WTC11 (cell line): ENCODE measurements at regions of chr6 and their contacts with region 1.

Region 1: GRCh38 chr6:27295301-27296081 is 16.6 kb downstream of the POM121L2 start:
- DNase-seq: peak; percentile 41
- ATAC-seq: peak; percentile 46
- H3K4me3 Mint-ChIP-seq: peak overlapping the region; percentile 93
- H3K27ac Mint-ChIP-seq: no peak overlapping the region
- H3K4me1 Mint-ChIP-seq: peaks cover 35% of the 10 kb centered on the region
- H3K27me3 Mint-ChIP-seq: peaks cover 29% of the 10 kb centered on the region
- CTCF ChIP-seq: no peak

Region 2: GRCh38 chr6:27312146-27312949 is 16.9 kb after region 1 on chr6 and contains the start of gene POM121L2:
- CTCF ChIA-PET with region 1: interaction called, 12 read pairs
- POLR2A ChIA-PET with region 1: no interaction called
- DNase-seq: peak; percentile 84
- ATAC-seq: peak; percentile 71
- H3K4me3 Mint-ChIP-seq: peak within 1 kb of the TSS; percentile 91
- H3K27ac Mint-ChIP-seq: no peak within 1 kb of the TSS
- H3K4me1 Mint-ChIP-seq: peaks cover 8% of the 10 kb centered on the region
- H3K27me3 Mint-ChIP-seq: peaks cover 65% of the 10 kb centered on the region
- CTCF ChIP-seq: peak; percentile 66
- total RNA-seq, gene POM121L2: 0.13 to 0.16 TPM in 2 of 3 replicates, not detected in the other

Region 3: DNA sequence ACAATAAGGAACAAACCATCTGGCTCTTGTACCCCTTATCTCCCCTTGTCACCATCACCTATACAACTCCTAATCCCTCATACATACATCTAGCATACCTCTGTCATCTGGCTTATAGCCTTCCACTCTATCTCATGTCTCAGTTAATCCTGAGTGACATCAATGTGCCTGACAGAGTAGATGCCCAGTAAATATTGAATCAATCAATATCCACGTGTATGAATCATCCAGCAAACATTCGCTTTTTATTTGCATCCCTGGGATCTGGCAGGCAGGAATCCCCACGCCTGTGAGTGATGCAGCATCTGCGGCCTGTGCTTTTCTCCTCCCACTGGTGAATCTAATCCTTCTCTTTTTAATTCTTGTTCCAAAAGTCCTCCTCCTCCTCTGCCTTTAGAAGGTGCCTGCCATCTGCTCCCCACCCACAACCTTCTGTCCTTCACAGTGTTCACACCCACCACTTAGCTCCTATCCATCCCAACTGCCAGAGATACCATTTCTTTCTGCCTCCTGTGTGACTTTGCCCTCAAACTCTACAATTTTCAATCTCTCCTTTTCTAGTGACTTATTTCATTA is 130.6 kb after region 1 on chr6:
- CTCF ChIA-PET with region 1: no interaction called
- POLR2A ChIA-PET with region 1: no interaction called
- DNase-seq: no peak
- ATAC-seq: no peak
- H3K4me3 Mint-ChIP-seq: no peak overlapping the region
- H3K27ac Mint-ChIP-seq: no peak overlapping the region
- H3K4me1 Mint-ChIP-seq: peaks cover 5% of the 10 kb centered on the region; the same call in 1 of the 2 replicates
- H3K27me3 Mint-ChIP-seq: no peaks in the 10 kb centered on the region; the same call in 1 of the 2 replicates
- CTCF ChIP-seq: no peak